CD8-positive, alpha-beta T cell (primary cell): ENCODE measurements at regions of chr10 and their contacts with region 1.

Region 1: DNA sequence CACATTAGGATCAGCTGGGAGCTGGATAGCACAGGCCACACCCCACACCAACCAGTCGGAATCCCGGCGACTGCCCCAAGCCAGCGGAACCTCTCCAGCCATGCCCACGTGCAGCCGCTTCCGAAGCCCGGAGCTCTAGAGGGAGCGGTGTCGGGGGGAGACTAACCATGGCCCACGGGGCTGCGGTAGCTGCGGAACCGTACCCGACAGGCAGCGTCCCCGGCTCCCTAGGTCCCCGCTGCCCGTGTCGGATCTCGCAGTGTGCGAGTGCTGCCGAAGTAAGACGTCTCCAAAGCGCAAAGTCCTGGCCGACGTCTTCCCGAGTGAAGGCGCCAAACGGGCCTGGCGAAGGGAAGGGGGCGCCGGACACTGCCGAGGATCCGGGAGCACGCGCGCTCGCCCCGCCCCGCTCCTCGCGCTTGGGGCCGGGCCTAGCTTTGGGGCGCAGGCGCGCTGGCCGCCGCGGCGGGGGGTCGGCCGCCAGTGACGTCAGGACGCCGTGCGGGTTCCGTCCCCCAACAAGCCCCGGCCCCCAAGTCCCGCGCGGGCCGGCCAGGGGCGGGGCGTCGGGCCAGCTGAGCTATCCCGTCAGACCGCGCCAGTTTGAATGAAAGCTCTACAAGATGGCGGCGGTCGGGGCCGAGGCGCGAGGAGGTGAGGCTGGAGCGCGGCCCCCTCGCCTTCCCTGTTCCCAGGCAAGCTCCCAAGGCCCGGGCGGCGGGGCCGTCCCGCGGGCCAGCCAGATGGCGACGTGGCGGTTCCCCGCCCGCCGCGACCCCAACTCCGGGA is at the start of gene SUV39H2:
- DNase-seq: peak; percentile 78 to 96 (median 92)
- ATAC-seq: peak; percentile 80
- H3K4me3 ChIP-seq: peak within 1 kb of the TSS; percentile 92 to 94
- H3K4me3 Mint-ChIP-seq: peak within 1 kb of the TSS; percentile 96
- H3K27ac ChIP-seq: peak within 1 kb of the TSS; percentile 67 to 69
- H3K27ac Mint-ChIP-seq: peak within 1 kb of the TSS; percentile 79
- H3K4me1 ChIP-seq: peaks cover 26% of the 10 kb centered on the region
- H3K4me1 Mint-ChIP-seq: peaks cover 31% of the 10 kb centered on the region
- H3K27me3 ChIP-seq: no peaks in the 10 kb centered on the region
- H3K27me3 Mint-ChIP-seq: no peaks in the 10 kb centered on the region
- CTCF ChIP-seq: no peak
- total RNA-seq, gene SUV39H2: 2.6 to 3.1 TPM

Region 2: GRCh38 chr10:14904316-14904732 is 25.9 kb after region 1 on chr10:
- CTCF ChIA-PET with region 1: interaction called, 6 read pairs
- POLR2A ChIA-PET with region 1: interaction called, 3 read pairs
- intact Hi-C with region 1: loop called in 1 of 2 experiments (anchors 2 kb)
- DNase-seq: peak in 4 of 9 experiments; percentile 11 to 58 (median 33)
- ATAC-seq: peak; percentile 82
- H3K4me3 ChIP-seq: no peak overlapping the region
- H3K4me3 Mint-ChIP-seq: no peak overlapping the region
- H3K27ac ChIP-seq: no peak overlapping the region
- H3K27ac Mint-ChIP-seq: peak overlapping the region; percentile 4
- H3K4me1 ChIP-seq: no peaks in the 10 kb centered on the region
- H3K4me1 Mint-ChIP-seq: peaks cover 13% of the 10 kb centered on the region
- H3K27me3 ChIP-seq: no peaks in the 10 kb centered on the region
- H3K27me3 Mint-ChIP-seq: no peaks in the 10 kb centered on the region
- CTCF ChIP-seq: peak; percentile 76

Region 3: GRCh38 chr10:14954001-14954770 is 75.7 kb after region 1 on chr10 and contains the start of gene DCLRE1C:
- CTCF ChIA-PET with region 1: interaction called, 3 read pairs
- POLR2A ChIA-PET with region 1: interaction called, 9 read pairs
- intact Hi-C with region 1: loop called (anchors 1 to 2 kb)
- DNase-seq: peak; percentile 65 to 93 (median 86)
- ATAC-seq: peak; percentile 84
- H3K4me3 ChIP-seq: peak within 1 kb of the TSS; percentile 79 to 95
- H3K4me3 Mint-ChIP-seq: peak within 1 kb of the TSS; percentile 92
- H3K27ac ChIP-seq: peak within 1 kb of the TSS; percentile 64 to 82
- H3K27ac Mint-ChIP-seq: peak within 1 kb of the TSS; percentile 96
- H3K4me1 ChIP-seq: peaks cover 29% of the 10 kb centered on the region
- H3K4me1 Mint-ChIP-seq: peaks cover 52% of the 10 kb centered on the region
- H3K27me3 ChIP-seq: no peaks in the 10 kb centered on the region
- H3K27me3 Mint-ChIP-seq: no peaks in the 10 kb centered on the region
- CTCF ChIP-seq: no peak
- total RNA-seq, gene DCLRE1C: 15.1 to 15.9 TPM

Region 4: DNA sequence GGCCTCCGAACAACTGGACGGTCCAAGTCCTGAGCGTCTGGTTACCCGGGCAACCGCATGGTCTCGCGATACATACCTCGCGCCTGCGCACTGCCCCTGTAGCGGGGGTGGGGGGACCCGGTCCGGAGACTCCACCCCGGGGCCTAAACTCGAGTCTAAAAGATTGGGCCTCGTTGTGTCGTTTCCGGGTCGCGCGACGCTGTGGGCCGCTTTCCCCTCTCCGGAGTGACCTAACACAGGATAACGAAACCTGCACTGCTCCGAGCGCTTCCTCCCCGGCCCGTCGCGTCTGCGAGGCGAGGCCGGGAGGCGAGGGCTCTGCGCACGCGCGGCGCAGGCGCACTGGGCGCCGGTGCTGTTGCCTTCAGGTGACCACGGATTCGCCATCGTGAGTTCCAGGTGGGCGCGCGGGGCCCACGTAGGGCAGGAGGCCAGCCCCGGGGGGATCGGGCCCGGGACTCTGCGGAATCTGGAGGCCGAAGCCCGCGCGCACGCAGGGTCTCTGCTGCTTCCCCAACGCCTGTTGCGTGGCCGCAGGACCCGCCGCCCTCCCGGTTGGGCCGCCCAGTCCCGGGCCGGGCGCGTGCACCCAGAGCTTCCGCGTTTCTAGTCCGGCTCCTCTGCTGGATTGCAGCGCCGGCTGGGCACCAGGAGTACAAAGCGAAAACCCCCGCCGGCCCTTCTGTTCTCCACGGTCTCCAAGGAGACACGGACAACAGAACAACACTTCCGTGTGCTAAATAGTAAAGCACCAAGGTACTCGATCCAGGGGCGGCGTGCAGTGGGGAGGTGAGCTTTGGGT is 218.8 kb after region 1 on chr10 and contains the start of gene RPP38:
- CTCF ChIA-PET with region 1: no interaction called
- POLR2A ChIA-PET with region 1: no interaction called
- intact Hi-C with region 1: loop called (anchors 2 to 5 kb)
- DNase-seq: peak; percentile 85 to 98 (median 95)
- ATAC-seq: peak; percentile 83
- H3K4me3 ChIP-seq: peak within 1 kb of the TSS; percentile 74 to 88
- H3K4me3 Mint-ChIP-seq: peak within 1 kb of the TSS; percentile 97
- H3K27ac ChIP-seq: peak within 1 kb of the TSS; percentile 92 to 96
- H3K27ac Mint-ChIP-seq: peak within 1 kb of the TSS; percentile 97
- H3K4me1 ChIP-seq: peaks cover 28% of the 10 kb centered on the region
- H3K4me1 Mint-ChIP-seq: peaks cover 35% of the 10 kb centered on the region
- H3K27me3 ChIP-seq: no peaks in the 10 kb centered on the region
- H3K27me3 Mint-ChIP-seq: no peaks in the 10 kb centered on the region
- CTCF ChIP-seq: no peak
- total RNA-seq, gene RPP38: 10.6 to 12.3 TPM